GM12878 (cell line): ENCODE measurements at regions of chr17 and their contacts with region 1.

Region 1: GRCh38 chr17:28644985-28645939 is at the start of gene BLTP2:
- DNase-seq: peak; percentile 82
- ATAC-seq: peak; percentile 97
- H3K4me3 ChIP-seq: peak within 1 kb of the TSS; percentile 85
- H3K27ac ChIP-seq: peak within 1 kb of the TSS; percentile 85
- H3K4me1 ChIP-seq: peaks cover 14% of the 10 kb centered on the region
- H3K27me3 ChIP-seq: no peaks in the 10 kb centered on the region
- CTCF ChIP-seq: no peak
- EP300 ChIP-seq: no peak
- POLR2A ChIP-seq: peak; percentile 86
- RAD21 ChIP-seq: no peak
- polyA plus RNA-seq, gene BLTP2: 14.2 to 16.9 TPM

Region 2: DNA sequence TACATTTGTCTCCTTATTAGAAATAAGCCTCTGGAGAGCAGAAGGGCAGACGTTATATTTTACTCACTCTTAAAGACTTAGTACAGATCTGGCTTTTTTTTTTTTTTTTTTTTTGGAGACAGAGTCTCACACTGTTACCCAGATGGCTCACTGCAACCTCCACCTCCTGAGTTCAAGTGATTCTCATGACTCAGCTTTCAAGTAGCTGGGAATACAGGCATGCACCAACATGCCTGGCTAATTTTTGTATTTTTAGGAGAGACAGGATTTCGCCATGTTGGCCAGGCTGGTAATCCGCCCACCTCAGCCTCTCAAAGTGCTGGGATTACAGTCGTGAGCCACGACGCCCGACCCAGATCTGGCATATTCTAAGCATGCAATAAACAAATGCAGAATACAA is 362.7 kb before region 1 on chr17:
- CTCF ChIA-PET with region 1: no interaction called
- POLR2A ChIA-PET with region 1: no interaction called
- RAD21 ChIA-PET with region 1: no interaction called
- SMC1A ChIA-PET with region 1: no interaction called
- in situ Hi-C with region 1: no loop called
- intact Hi-C with region 1: no loop called
- DNase-seq: no peak
- ATAC-seq: no peak
- H3K4me3 ChIP-seq: no peak overlapping the region
- H3K27ac ChIP-seq: no peak overlapping the region
- H3K4me1 ChIP-seq: no peaks in the 10 kb centered on the region; the same call in 1 of the 2 replicates
- H3K27me3 ChIP-seq: no peaks in the 10 kb centered on the region
- CTCF ChIP-seq: no peak
- EP300 ChIP-seq: no peak
- POLR2A ChIP-seq: no peak
- RAD21 ChIP-seq: no peak

Region 3: GRCh38 chr17:28598799-28599310 is 46.4 kb before region 1 on chr17 and contains the start of gene SPAG5:
- CTCF ChIA-PET with region 1: interaction called, 6 read pairs
- POLR2A ChIA-PET with region 1: interaction called, 9 read pairs
- RAD21 ChIA-PET with region 1: no interaction called
- SMC1A ChIA-PET with region 1: interaction called, 3 read pairs
- in situ Hi-C with region 1: no loop called
- intact Hi-C with region 1: loop called (anchors 2 kb)
- DNase-seq: peak; percentile 80
- ATAC-seq: peak; percentile 95
- H3K4me3 ChIP-seq: peak within 1 kb of the TSS; percentile 98
- H3K27ac ChIP-seq: peak within 1 kb of the TSS; percentile 94
- H3K4me1 ChIP-seq: peaks cover 5% of the 10 kb centered on the region
- H3K27me3 ChIP-seq: no peaks in the 10 kb centered on the region
- CTCF ChIP-seq: no peak
- EP300 ChIP-seq: no peak
- POLR2A ChIP-seq: peak; percentile 95
- RAD21 ChIP-seq: no peak
- polyA plus RNA-seq, gene SPAG5: 73.5 to 139 TPM

Region 4: DNA sequence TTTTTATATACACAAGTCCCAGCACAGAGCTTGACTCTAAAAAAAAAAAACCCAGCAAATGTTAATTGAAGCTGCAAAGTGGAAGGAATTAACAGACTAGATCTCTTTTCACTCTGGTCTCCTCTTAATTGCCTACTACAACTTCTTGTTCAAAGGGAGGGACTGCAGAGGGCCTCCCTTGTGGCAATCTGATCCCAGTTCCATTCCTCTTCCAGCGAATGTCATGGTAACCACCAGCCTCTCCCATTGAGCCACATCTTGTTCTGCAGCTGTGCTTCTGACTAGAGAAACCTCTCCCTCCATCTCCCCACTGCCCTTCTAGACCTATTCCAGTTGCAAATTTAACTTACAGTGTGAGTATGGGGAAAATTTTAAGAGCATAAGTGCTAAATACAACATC is 22.6 kb after region 1 on chr17:
- CTCF ChIA-PET with region 1: interaction called, 84 read pairs
- POLR2A ChIA-PET with region 1: interaction called, 46 read pairs
- RAD21 ChIA-PET with region 1: interaction called, 18 read pairs
- SMC1A ChIA-PET with region 1: interaction called, 15 read pairs
- in situ Hi-C with region 1: no loop called
- intact Hi-C with region 1: no loop called
- DNase-seq: no peak
- ATAC-seq: no peak
- H3K4me3 ChIP-seq: no peak overlapping the region
- H3K27ac ChIP-seq: no peak overlapping the region
- H3K4me1 ChIP-seq: peaks cover 3% of the 10 kb centered on the region; the same call in 1 of the 2 replicates
- H3K27me3 ChIP-seq: no peaks in the 10 kb centered on the region
- CTCF ChIP-seq: no peak
- EP300 ChIP-seq: no peak
- POLR2A ChIP-seq: no peak
- RAD21 ChIP-seq: no peak

Region 5: GRCh38 chr17:28710861-28711722 is 65.8 kb after region 1 on chr17:
- CTCF ChIA-PET with region 1: interaction called, 18 read pairs
- POLR2A ChIA-PET with region 1: interaction called, 22 read pairs
- RAD21 ChIA-PET with region 1: interaction called, 6 read pairs
- SMC1A ChIA-PET with region 1: interaction called, 4 read pairs
- in situ Hi-C with region 1: no loop called
- intact Hi-C with region 1: loop called (anchors 2 kb)
- DNase-seq: peak; percentile 50
- ATAC-seq: peak; percentile 94
- H3K4me3 ChIP-seq: peak overlapping the region; percentile 73
- H3K27ac ChIP-seq: peak overlapping the region; percentile 61
- H3K4me1 ChIP-seq: peaks cover 9% of the 10 kb centered on the region
- H3K27me3 ChIP-seq: no peaks in the 10 kb centered on the region
- CTCF ChIP-seq: no peak
- EP300 ChIP-seq: no peak
- POLR2A ChIP-seq: peak; percentile 62; the same call in 1 of the 2 replicates
- RAD21 ChIP-seq: no peak

Region 6: GRCh38 chr17:28985950-28986713 is 340.9 kb after region 1 on chr17:
- CTCF ChIA-PET with region 1: no interaction called
- POLR2A ChIA-PET with region 1: no interaction called
- RAD21 ChIA-PET with region 1: no interaction called
- SMC1A ChIA-PET with region 1: no interaction called
- in situ Hi-C with region 1: no loop called
- intact Hi-C with region 1: no loop called
- DNase-seq: no peak
- ATAC-seq: no peak
- H3K4me3 ChIP-seq: no peak overlapping the region
- H3K27ac ChIP-seq: no peak overlapping the region
- H3K4me1 ChIP-seq: peaks cover 14% of the 10 kb centered on the region
- H3K27me3 ChIP-seq: no peaks in the 10 kb centered on the region
- CTCF ChIP-seq: no peak
- EP300 ChIP-seq: no peak
- POLR2A ChIP-seq: no peak
- RAD21 ChIP-seq: no peak

Region 7: GRCh38 chr17:29069526-29070041 is 424.3 kb after region 1 on chr17:
- CTCF ChIA-PET with region 1: no interaction called
- POLR2A ChIA-PET with region 1: no interaction called
- RAD21 ChIA-PET with region 1: no interaction called
- SMC1A ChIA-PET with region 1: no interaction called
- in situ Hi-C with region 1: no loop called
- intact Hi-C with region 1: no loop called
- DNase-seq: no peak
- ATAC-seq: no peak
- H3K4me3 ChIP-seq: no peak overlapping the region
- H3K27ac ChIP-seq: no peak overlapping the region
- H3K4me1 ChIP-seq: no peaks in the 10 kb centered on the region
- H3K27me3 ChIP-seq: no peaks in the 10 kb centered on the region
- CTCF ChIP-seq: no peak
- EP300 ChIP-seq: no peak
- POLR2A ChIP-seq: no peak
- RAD21 ChIP-seq: no peak